Ascending aorta (tissue), 2 donors: ENCODE measurements at regions of chr9 and their contacts with region 1.

Region 1: DNA sequence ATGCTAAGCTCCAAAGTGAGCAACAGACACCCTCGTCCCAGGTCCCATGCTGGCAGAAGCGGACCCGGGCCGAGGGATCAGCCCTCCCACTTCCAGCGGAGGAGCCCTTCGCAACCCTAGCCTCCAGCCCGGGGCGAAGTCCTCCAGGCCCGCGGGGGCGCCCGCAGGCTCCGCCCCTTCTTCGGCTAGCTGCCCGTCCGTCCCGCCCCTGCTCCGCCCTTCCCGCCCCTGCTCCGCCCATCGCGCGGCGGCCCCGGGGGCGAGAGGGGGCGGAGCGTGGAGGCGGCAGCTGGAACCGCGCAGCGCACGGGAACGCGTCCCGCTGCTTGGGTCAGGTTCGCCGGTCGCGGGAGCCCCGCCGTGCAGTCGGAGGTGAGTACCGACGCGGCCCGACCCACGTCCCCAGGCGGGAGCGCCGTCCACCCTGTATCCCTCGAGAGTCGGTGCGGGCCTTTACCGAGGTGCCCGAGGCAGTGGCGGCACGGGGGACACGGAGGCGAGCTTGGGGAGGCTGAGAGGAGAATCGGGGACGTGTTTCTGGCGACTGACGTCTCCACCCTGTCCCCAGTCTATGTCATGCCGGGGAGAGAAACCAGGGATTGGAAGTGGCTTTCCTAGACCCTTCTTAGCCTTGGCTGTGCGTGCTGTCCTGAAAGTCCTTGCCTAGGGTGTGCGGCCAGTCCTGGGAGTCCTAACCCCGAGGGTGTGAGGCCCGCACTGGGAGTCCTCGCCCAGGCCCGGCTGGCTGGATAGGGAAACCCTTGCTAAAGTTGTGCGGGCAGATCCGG is at the start of gene ACO1:
- DNase-seq: peak; percentile 50 to 94
- H3K4me3 ChIP-seq: peak within 1 kb of the TSS; percentile 70 to 84
- H3K27ac ChIP-seq: peak within 1 kb of the TSS; percentile 85 to 89
- H3K4me1 ChIP-seq: peaks cover 0 to 6% of the 10 kb centered on the region in 2 donors
- H3K27me3 ChIP-seq: no peaks in the 10 kb centered on the region
- CTCF ChIP-seq: no peak
- total RNA-seq, gene ACO1: 19.1 TPM

Region 2: GRCh38 chr9:32344551-32345182 is 39.9 kb before region 1 on chr9:
- intact Hi-C with region 1: no loop called
- DNase-seq: no peak
- H3K4me3 ChIP-seq: no peak overlapping the region
- H3K27ac ChIP-seq: no peak overlapping the region
- H3K4me1 ChIP-seq: no peaks in the 10 kb centered on the region
- H3K27me3 ChIP-seq: no peaks in the 10 kb centered on the region
- CTCF ChIP-seq: no peak

Region 3: GRCh38 chr9:32526041-32526706 is 141.6 kb after region 1 on chr9 and contains the start of gene RIGI:
- intact Hi-C with region 1: loop called (anchors 1 kb)
- DNase-seq: peak; percentile 72 to 97
- H3K4me3 ChIP-seq: peak within 1 kb of the TSS; percentile 71 to 78
- H3K27ac ChIP-seq: peak within 1 kb of the TSS; percentile 78 to 79
- H3K4me1 ChIP-seq: peaks cover 7 to 17% of the 10 kb centered on the region in 2 donors
- H3K27me3 ChIP-seq: no peaks in the 10 kb centered on the region
- CTCF ChIP-seq: peak; percentile 16 to 35 (median 29)
- total RNA-seq, gene RIGI: 1.9 TPM

Region 4: GRCh38 chr9:32550562-32551433 is 166.2 kb after region 1 on chr9:
- intact Hi-C with region 1: loop called (anchors 1 kb)
- DNase-seq: peak; percentile 81 to 97
- H3K4me3 ChIP-seq: peak overlapping the region; percentile 67 to 80
- H3K27ac ChIP-seq: peak overlapping the region; percentile 80 to 90
- H3K4me1 ChIP-seq: peaks cover 0 to 16% of the 10 kb centered on the region in 2 donors
- H3K27me3 ChIP-seq: no peaks in the 10 kb centered on the region
- CTCF ChIP-seq: peak in 1 of 3 experiments; percentile 24

Region 5: GRCh38 chr9:32571969-32572899 is 187.7 kb after region 1 on chr9:
- intact Hi-C with region 1: loop called (anchors 1 kb)
- DNase-seq: peak in 1 of 2 donors; percentile 81
- H3K4me3 ChIP-seq: peak overlapping the region; percentile 66 to 93
- H3K27ac ChIP-seq: peak overlapping the region; percentile 82 to 91
- H3K4me1 ChIP-seq: peaks cover 0 to 12% of the 10 kb centered on the region in 2 donors
- H3K27me3 ChIP-seq: no peaks in the 10 kb centered on the region
- CTCF ChIP-seq: peak; percentile 32 to 53 (median 34)

Region 6: GRCh38 chr9:33007755-33008154 is 623.2 kb after region 1 on chr9:
- intact Hi-C with region 1: loop called (anchors 10 kb)
- DNase-seq: no peak
- H3K4me3 ChIP-seq: no peak overlapping the region
- H3K27ac ChIP-seq: no peak overlapping the region
- H3K4me1 ChIP-seq: no peaks in the 10 kb centered on the region
- H3K27me3 ChIP-seq: no peaks in the 10 kb centered on the region
- CTCF ChIP-seq: no peak